Activated naive CD8-positive, alpha-beta T cell treated with anti-CD3 and anti-CD28 coated beads, Interleukin-2, amount 10 ng/mL, durations not matched to agents 7 days and 5 days (primary cell): ENCODE measurements at regions of chr3 and their contacts with region 1.

Region 1: GRCh38 chr3:45105855-45106671 is 40.1 kb downstream of the CDCP1 start:
- DNase-seq: peak; percentile 83
- ATAC-seq: peak; percentile 76
- H3K4me3 Mint-ChIP-seq: peak overlapping the region; percentile 23
- H3K27ac Mint-ChIP-seq: peak overlapping the region; percentile 55
- H3K4me1 Mint-ChIP-seq: peaks cover 59% of the 10 kb centered on the region
- H3K27me3 Mint-ChIP-seq: peaks cover 17% of the 10 kb centered on the region

Region 2: GRCh38 chr3:45118615-45119071 is 12.6 kb after region 1 on chr3:
- POLR2A ChIA-PET with region 1: interaction called, 23 read pairs
- DNase-seq: no peak
- ATAC-seq: peak; percentile 38
- H3K4me3 Mint-ChIP-seq: peak overlapping the region; percentile 73
- H3K27ac Mint-ChIP-seq: peak overlapping the region; percentile 93
- H3K4me1 Mint-ChIP-seq: peaks cover 47% of the 10 kb centered on the region
- H3K27me3 Mint-ChIP-seq: peaks cover 13% of the 10 kb centered on the region